ENCODE measurements at regions of chr11 and their contacts with region 1.

Region 1: GRCh38 chr11:134139873-134140331 is 71.0 kb downstream of the JAM3 start:
- DNase-seq: peak; percentile 64 to 86
- H3K4me3 ChIP-seq: no peak overlapping the region
- H3K27ac ChIP-seq: peak overlapping the region; percentile 74 to 84
- H3K4me1 ChIP-seq: no peaks in the 10 kb centered on the region
- H3K27me3 ChIP-seq: no peaks in the 10 kb centered on the region
- CTCF ChIP-seq: peak; percentile 87 to 94 (median 90)
- POLR2A ChIP-seq: no peak

Region 2: DNA sequence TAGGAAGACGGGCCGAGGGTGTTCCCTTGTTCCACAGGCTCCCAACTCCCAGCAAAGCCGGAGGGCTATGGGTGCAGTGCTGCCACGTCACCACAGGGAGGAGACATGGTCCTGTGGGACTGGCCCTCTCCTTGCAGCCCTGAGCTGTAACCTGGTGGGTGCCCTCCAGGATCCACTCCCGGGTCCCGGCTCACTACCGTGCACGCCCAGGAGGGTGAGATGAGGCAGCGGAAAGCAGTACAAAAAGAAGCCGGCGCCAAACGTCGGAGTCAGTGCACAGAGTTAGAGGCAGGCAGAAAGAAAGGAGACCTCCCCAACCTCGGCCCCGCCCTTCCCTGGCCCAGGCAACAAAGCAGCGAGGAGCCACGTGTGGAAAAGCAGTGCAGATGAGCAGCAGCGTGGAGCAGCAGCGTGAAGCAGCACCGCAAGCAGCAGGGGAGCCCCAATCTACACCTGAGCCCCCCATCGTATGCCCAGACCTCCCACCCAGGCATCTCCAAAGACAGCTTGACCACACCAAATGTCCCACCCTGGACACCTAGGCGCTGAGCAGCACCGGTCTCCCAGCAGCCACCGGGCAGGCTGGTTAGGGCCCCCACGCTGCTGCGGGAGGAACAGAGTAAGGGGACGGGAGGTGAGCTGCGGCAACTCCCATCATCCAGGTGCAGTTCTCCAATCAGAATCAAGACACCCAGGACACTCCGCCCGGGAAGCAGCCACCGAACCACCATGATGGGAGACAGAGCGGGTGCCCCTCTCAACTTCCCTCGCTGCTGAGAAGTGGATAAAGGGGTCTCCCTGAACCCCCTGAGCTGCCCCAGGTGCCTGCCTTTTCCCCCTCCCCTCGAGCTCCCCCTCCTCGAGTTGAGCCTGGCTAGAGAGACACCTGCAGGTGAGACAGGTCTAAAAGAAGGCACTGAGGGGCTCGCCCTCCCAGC is 211.9 kb before region 1 on chr11:
- intact Hi-C with region 1: loop called (anchors 10 kb)
- DNase-seq: peak; percentile 65 to 75
- H3K4me3 ChIP-seq: no peak overlapping the region
- H3K27ac ChIP-seq: no peak overlapping the region
- H3K4me1 ChIP-seq: peaks cover 0 to 4% of the 10 kb centered on the region in 2 donors
- H3K27me3 ChIP-seq: no peaks in the 10 kb centered on the region
- CTCF ChIP-seq: peak; percentile 85 to 89 (median 87)
- POLR2A ChIP-seq: peak in 1 of 2 donors; percentile 6

Region 3: GRCh38 chr11:134050541-134051383 is 89.1 kb before region 1 on chr11:
- intact Hi-C with region 1: loop called (anchors 2 kb)
- DNase-seq: peak; percentile 77 to 81
- H3K4me3 ChIP-seq: no peak overlapping the region
- H3K27ac ChIP-seq: peak overlapping the region in 1 of 2 donors; percentile 31
- H3K4me1 ChIP-seq: peaks cover 0 to 6% of the 10 kb centered on the region in 2 donors
- H3K27me3 ChIP-seq: no peaks in the 10 kb centered on the region
- CTCF ChIP-seq: peak; percentile 93 to 98 (median 96)
- POLR2A ChIP-seq: no peak

Region 4: DNA sequence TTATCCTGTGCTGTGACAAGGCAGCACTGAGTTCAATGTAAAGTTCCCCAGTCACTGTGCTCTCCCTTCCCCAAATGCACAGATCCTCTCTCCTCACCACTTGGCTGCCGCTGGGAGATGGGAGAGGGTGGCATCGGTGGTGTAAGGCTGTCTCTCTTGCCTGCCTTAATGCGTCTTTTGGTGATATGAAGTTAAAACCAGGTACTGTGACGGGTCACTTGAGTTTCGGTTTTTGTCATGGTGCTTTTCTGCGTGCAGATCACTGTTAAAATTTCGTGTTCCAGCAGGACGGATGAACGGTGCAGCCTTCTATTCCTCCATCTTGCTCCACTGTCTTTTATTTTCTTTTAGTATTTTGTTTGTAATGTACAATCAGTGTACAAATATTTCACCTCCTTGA is 210.5 kb after region 1 on chr11:
- intact Hi-C with region 1: no loop called
- DNase-seq: no peak
- H3K4me3 ChIP-seq: no peak overlapping the region
- H3K27ac ChIP-seq: no peak overlapping the region
- H3K4me1 ChIP-seq: no peaks in the 10 kb centered on the region
- H3K27me3 ChIP-seq: no peaks in the 10 kb centered on the region
- CTCF ChIP-seq: no peak
- POLR2A ChIP-seq: no peak